WTC11 (cell line): ENCODE measurements at regions of chr20 and their contacts with region 1.

Region 1: GRCh38 chr20:57622579-57623377 is 2.6 kb upstream of the ZBP1 start:
- DNase-seq: peak; percentile 85
- ATAC-seq: peak; percentile 96
- H3K4me3 Mint-ChIP-seq: no peak overlapping the region
- H3K27ac Mint-ChIP-seq: no peak overlapping the region
- H3K4me1 Mint-ChIP-seq: peaks cover 9% of the 10 kb centered on the region
- H3K27me3 Mint-ChIP-seq: no peaks in the 10 kb centered on the region; the same call in 1 of the 2 replicates
- CTCF ChIP-seq: peak; percentile 93

Region 2: GRCh38 chr20:56957737-56958553 is 664.8 kb before region 1 on chr20:
- CTCF ChIA-PET with region 1: no interaction called
- POLR2A ChIA-PET with region 1: no interaction called
- DNase-seq: peak; percentile 36
- ATAC-seq: peak; percentile 77
- H3K4me3 Mint-ChIP-seq: no peak overlapping the region
- H3K27ac Mint-ChIP-seq: no peak overlapping the region; the same call in 1 of the 2 replicates
- H3K4me1 Mint-ChIP-seq: peaks cover 41% of the 10 kb centered on the region
- H3K27me3 Mint-ChIP-seq: no peaks in the 10 kb centered on the region
- CTCF ChIP-seq: no peak

Region 3: GRCh38 chr20:57596998-57597939 is 25.5 kb before region 1 on chr20:
- CTCF ChIA-PET with region 1: interaction called, 10 read pairs
- POLR2A ChIA-PET with region 1: no interaction called
- DNase-seq: peak; percentile 81
- ATAC-seq: peak; percentile 73
- H3K4me3 Mint-ChIP-seq: no peak overlapping the region
- H3K27ac Mint-ChIP-seq: no peak overlapping the region
- H3K4me1 Mint-ChIP-seq: peaks cover 14% of the 10 kb centered on the region
- H3K27me3 Mint-ChIP-seq: no peaks in the 10 kb centered on the region
- CTCF ChIP-seq: peak; percentile 88

Region 4: DNA sequence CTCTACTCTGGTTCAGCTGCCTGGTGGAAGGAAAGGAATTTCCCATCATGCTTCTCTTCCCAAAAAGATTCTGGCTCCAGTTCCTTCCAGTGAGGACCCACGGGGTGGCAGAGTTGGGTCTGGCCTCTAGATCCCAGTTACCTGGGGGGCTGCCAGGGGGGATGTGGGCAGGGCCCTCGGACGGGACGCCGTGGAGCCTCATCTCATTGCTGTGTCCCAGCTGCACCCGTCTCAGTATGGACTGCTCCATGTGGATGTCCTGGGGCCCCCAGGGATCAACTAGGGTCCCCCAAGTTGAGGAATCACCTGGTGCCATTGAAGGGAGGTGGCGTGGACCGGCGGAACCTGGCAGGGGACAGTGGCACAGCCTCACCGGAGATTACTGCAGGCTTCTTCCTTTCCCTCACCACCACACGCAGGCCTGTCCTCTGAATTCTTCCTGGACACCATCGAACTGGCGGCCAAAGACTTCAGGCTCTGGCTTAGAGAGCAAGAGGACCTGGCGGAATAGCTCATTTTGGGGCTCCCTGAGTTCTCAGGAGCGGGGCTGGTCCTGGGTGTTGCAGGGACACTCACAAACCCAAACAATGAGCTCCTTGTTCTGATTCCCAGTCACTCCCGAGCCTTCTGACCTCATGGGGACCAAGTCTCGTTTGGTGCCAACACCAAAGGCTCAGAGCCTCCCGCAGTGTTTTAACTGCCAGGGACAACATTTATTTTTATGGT is 11.0 kb before region 1 on chr20:
- CTCF ChIA-PET with region 1: interaction called, 37 read pairs
- POLR2A ChIA-PET with region 1: no interaction called
- DNase-seq: no peak
- ATAC-seq: no peak
- H3K4me3 Mint-ChIP-seq: no peak overlapping the region
- H3K27ac Mint-ChIP-seq: no peak overlapping the region
- H3K4me1 Mint-ChIP-seq: peaks cover 7% of the 10 kb centered on the region; the same call in 1 of the 2 replicates
- H3K27me3 Mint-ChIP-seq: no peaks in the 10 kb centered on the region
- CTCF ChIP-seq: no peak

Region 5: GRCh38 chr20:57654363-57654997 is 31.7 kb after region 1 on chr20:
- CTCF ChIA-PET with region 1: interaction called, 11 read pairs
- POLR2A ChIA-PET with region 1: no interaction called
- DNase-seq: peak; percentile 76
- ATAC-seq: peak; percentile 84
- H3K4me3 Mint-ChIP-seq: no peak overlapping the region
- H3K27ac Mint-ChIP-seq: peak overlapping the region; percentile 48; the same call in 1 of the 2 replicates
- H3K4me1 Mint-ChIP-seq: peaks cover 24% of the 10 kb centered on the region
- H3K27me3 Mint-ChIP-seq: no peaks in the 10 kb centered on the region
- CTCF ChIP-seq: peak; percentile 89

Region 6: GRCh38 chr20:57888591-57888990 is 265.8 kb after region 1 on chr20:
- CTCF ChIA-PET with region 1: no interaction called
- POLR2A ChIA-PET with region 1: no interaction called
- DNase-seq: no peak
- ATAC-seq: no peak
- H3K4me3 Mint-ChIP-seq: no peak overlapping the region
- H3K27ac Mint-ChIP-seq: no peak overlapping the region
- H3K4me1 Mint-ChIP-seq: peaks cover 10% of the 10 kb centered on the region
- H3K27me3 Mint-ChIP-seq: no peaks in the 10 kb centered on the region; the same call in 1 of the 2 replicates
- CTCF ChIP-seq: no peak